Ascending aorta (tissue), 2 donors: ENCODE measurements at regions of chr9 and their contacts with region 1.

Region 1: DNA sequence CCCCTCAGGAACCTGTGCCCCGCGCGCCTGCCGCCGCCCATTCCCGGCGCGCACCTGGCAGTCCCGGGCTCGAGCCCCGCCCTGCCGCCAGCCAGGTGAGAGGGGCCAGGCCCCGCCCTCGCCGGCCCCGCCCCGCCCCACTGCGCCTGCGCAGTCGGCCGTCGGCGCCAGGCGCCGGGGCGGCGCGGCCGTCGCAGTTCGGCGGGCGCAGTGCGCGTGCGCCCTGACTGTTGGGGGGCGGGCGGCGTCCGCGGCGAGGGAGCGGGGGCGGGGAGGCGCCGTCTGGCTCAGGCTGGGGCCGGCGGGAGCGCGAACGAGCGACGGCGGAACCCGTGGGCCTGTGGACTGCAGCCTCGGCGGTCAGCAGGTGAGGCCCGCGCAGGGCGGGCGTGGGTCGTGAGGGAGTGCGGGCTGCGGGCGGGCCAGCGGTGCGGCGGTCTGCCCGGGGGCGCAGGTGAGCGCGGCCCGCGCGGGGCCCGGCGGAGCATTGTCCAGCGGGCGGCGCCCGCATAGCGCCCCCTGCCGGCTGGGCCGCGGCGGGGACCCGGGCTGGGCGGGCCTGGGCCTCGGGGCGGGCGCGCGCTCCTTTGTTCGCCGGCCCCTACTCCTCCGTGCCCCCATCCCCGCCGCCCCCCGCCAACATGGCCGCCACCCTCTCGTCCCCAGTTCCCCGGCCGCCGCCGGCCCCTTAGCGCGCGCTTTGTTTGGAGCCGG is at the start of gene SPIN1:
- DNase-seq: peak in 1 of 2 donors; percentile 83
- H3K4me3 ChIP-seq: peak within 1 kb of the TSS; percentile 99 to 100
- H3K27ac ChIP-seq: peak within 1 kb of the TSS; percentile 88 to 95
- H3K4me1 ChIP-seq: peaks cover 0 to 11% of the 10 kb centered on the region in 2 donors
- H3K27me3 ChIP-seq: no peaks in the 10 kb centered on the region
- CTCF ChIP-seq: peak in 1 of 3 experiments; percentile 78
- total RNA-seq, gene SPIN1: 11.6 TPM

Region 2: DNA sequence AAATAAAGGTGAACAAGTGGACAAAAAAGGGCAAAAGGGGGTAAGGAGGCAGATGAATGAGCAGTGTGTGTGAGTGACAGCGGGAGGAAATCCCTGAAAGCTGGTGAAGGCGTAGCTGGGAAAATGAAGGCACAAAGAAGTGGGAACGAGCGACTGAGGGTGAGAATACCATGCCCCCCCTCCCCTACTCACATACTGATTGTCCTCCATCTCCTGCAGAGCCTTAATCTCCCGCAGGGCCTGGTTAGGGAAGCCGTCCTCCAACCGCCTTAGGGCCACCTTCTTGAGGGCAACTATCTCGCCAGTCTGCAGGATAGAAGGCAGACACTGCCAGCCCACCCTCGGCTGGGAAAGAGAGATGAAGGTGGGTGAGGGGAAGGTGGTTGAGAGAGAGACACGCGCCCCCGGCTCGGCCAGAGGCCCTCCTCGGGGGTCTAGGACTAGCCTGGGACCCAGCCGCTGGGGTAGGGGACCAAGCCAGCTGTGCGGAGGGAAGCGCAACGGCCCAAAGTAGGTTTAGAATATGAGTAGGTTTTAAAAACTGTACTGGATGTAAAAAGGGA is 414.5 kb before region 1 on chr9:
- intact Hi-C with region 1: loop called (anchors 5 kb)
- DNase-seq: no peak
- H3K4me3 ChIP-seq: peak overlapping the region; percentile 72 to 75
- H3K27ac ChIP-seq: peak overlapping the region in 1 of 2 donors; percentile 6
- H3K4me1 ChIP-seq: peaks cover 0 to 18% of the 10 kb centered on the region in 2 donors
- H3K27me3 ChIP-seq: no peaks in the 10 kb centered on the region
- CTCF ChIP-seq: no peak

Region 3: GRCh38 chr9:88534456-88535261 is 146.3 kb after region 1 on chr9 and contains the start of gene NXNL2:
- intact Hi-C with region 1: loop called (anchors 1 kb)
- DNase-seq: peak in 1 of 2 donors; percentile 88
- H3K4me3 ChIP-seq: peak within 1 kb of the TSS; percentile 59 to 94
- H3K27ac ChIP-seq: peak within 1 kb of the TSS; percentile 93
- H3K4me1 ChIP-seq: peaks cover 6 to 12% of the 10 kb centered on the region in 2 donors
- H3K27me3 ChIP-seq: no peaks in the 10 kb centered on the region
- CTCF ChIP-seq: no peak
- total RNA-seq, gene NXNL2: not detected

Region 4: DNA sequence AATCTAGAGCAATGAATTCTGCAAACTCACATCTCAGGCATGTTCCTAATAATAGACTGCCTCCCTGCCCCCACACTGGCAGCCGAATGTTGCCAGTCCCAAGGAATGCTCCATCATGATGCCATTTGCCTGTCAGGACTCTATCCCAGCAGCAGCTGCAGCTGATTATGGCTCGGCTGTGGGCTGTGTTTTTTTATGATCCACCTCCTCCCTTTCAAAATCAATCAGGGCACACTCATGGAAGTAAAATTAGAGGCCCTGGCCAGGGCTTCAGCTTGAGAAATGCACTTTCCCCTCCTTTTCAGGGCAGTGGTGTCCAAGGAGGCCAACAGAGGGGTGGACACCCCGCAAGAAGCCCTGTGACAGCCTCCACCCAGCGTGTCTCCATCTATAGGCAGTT is 426.2 kb after region 1 on chr9:
- intact Hi-C with region 1: loop called (anchors 10 kb)
- DNase-seq: peak; percentile 44 to 93
- H3K4me3 ChIP-seq: no peak overlapping the region
- H3K27ac ChIP-seq: peak overlapping the region; percentile 58 to 70
- H3K4me1 ChIP-seq: peaks cover 10 to 15% of the 10 kb centered on the region in 2 donors
- H3K27me3 ChIP-seq: no peaks in the 10 kb centered on the region
- CTCF ChIP-seq: no peak

Region 5: DNA sequence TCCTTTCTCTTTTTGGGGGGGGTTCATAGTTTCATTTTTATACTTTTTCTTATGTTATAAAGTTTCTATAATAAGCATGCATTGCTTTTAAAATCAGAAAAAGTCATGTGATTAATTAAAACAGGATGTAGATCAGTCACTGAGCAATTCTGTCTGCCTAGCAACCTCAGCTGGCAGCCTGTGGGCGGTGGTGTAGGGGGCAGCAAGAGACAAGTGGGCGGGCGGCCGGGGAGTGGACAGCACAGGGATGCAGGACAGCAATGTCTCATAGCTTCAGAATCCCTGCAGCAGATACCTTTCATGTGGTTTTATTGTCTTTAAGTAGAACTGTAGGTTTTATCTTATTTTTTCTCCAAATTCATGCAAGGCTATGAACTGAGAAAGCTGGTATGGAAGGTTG is 501.1 kb after region 1 on chr9:
- intact Hi-C with region 1: no loop called
- DNase-seq: no peak
- H3K4me3 ChIP-seq: no peak overlapping the region
- H3K27ac ChIP-seq: no peak overlapping the region
- H3K4me1 ChIP-seq: no peaks in the 10 kb centered on the region
- H3K27me3 ChIP-seq: no peaks in the 10 kb centered on the region
- CTCF ChIP-seq: no peak

Region 6: GRCh38 chr9:89310475-89311346 is 922.4 kb after region 1 on chr9 and contains the start of gene CKS2:
- intact Hi-C with region 1: loop called (anchors 5 kb)
- DNase-seq: peak; percentile 99 to 100
- H3K4me3 ChIP-seq: peak within 1 kb of the TSS; percentile 91
- H3K27ac ChIP-seq: peak within 1 kb of the TSS; percentile 100
- H3K4me1 ChIP-seq: peaks cover 3 to 11% of the 10 kb centered on the region in 2 donors
- H3K27me3 ChIP-seq: no peaks in the 10 kb centered on the region
- CTCF ChIP-seq: no peak
- total RNA-seq, gene CKS2: not detected